ENCODE measurements at regions of chr6 and their contacts with region 1.

Region 1: DNA sequence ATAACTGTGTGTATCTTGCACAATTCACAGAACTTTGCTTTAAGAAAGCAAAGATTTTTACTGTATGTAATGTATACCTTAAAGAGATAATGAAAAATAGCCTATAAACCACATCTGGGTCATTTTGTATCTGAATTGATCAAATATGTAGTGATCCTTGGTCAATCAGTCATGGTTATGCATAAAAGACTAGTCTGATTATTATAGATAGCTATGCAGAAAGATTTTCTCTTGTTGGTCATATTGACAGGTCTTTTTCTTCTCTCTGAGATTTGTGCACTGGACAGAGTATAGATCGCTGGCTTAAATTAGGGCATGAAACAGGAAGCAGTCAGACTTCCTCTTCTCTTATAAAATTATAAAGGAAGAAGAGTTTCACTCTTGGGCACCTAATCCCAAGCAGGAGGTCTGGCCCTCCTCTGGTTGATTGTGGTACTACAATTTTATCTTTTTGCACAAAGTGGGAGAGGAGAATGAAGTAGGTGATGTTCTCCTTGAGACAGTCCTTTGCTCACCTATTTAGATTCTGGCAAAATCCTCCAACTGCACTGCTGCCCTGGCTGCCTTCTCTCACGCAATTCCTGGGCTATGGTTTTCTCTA is 380.9 kb upstream of the RGS17 start:
- DNase-seq: no peak
- ATAC-seq: no peak

Region 2: GRCh38 chr6:153032255-153032882 is 479.6 kb before region 1 on chr6:
- intact Hi-C with region 1: loop called (anchors 5 kb)
- DNase-seq: no peak
- ATAC-seq: no peak